AG04449 (cell line): ENCODE measurements at regions of chr3 and their contacts with region 1.

Region 1: DNA sequence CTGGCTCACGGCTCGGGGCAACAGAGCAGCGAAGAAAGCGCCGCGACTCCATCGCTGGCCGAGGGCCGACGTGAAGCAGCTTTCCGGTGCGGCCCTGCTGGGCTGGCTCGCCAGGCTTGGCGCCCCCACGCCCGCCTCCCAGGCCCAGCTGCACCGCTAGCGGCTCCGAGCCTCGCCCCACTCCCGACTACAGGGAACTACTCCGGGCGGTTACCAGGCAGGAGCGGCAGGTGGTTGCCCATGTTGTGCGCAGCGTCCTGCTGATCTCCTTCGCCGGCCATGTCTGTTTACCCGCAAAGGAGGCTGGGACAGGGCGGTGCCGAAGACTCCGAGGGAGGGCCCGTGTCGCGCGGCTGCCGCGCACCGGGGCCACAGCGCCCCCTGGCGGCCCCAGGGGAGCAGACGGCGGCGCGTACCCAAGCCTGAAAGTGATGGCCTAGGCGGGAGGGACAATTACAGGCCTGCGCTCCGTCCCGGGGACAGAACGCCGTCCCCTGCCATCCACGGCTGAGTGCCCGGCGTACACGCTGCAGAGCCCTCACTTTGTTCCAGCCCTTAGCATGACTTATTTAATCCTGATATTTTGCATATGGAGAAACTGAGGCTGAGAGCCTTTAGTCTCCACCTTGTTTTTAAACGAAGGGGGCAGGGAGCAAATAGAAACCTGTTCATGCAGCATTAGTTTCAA is at the start of gene CRBN:
- DNase-seq: no peak
- H3K4me3 ChIP-seq: peak within 1 kb of the TSS; percentile 89
- CTCF ChIP-seq: peak; percentile 90

Region 2: DNA sequence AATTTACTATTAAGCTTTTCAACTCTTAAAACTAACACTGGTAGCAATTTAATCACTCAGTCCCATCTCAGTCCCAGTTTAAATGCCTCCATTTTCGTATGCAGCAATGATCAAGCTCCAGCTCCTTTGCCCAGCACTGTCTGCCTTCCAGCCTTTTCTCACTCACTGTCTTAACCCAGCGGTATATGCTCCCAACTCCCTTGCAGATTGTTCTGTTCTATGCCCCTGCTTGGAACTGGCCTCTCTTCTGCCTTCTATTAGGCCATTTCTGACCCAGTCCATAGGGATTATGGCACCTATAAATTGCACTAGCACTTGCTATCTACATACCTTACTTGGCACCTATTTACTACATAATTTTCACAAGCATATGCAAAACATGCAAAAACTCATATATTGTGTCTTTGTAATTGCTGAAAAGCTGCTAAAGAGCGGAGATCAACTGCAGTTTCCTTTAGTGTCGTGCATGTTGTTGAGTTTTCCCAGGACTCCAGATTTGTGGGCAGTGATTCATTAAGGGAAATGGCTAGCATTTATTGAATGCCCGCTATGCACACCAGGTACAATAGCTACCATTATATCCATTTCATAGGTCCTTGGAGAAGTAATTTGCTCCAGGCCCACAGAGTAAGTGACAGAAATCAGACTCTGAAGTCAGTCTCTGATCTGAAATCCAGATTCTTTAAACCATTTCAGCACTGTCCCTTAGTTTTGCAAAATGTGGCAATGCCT is 24.5 kb before region 1 on chr3:
- CTCF ChIA-PET with region 1: interaction called, 80 read pairs
- POLR2A ChIA-PET with region 1: interaction called, 3 read pairs
- DNase-seq: no peak
- H3K4me3 ChIP-seq: no peak overlapping the region
- CTCF ChIP-seq: no peak

Region 3: DNA sequence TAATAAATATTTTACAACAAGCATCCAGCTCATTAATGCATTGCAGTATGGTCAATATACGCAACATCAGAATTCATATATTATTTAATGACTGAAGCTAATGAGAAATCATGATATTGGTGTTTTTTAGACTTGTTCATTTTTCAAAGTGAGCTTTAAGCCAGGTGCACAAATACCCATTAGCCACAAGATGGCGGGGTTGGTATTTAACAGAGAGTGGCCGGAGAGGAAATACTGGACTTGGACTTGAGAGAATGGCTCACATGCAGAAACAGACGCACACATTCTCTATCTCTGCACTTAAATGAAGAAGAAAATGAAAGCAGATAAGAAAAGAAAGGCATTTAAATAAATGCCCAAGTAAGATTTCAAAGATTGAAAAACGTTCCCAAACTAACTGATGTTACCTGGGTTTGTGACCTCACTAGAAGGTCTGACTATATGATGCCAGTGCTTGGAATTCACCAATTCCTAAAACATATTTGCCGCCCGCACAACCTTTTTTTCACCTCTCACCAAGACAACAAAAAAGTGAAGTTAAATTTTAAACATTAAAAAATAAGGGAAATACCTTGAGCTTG is 21.2 kb after region 1 on chr3:
- CTCF ChIA-PET with region 1: interaction called, 11 read pairs
- POLR2A ChIA-PET with region 1: no interaction called
- DNase-seq: no peak
- H3K4me3 ChIP-seq: no peak overlapping the region
- CTCF ChIP-seq: peak; percentile 50